Left cardiac atrium (tissue), 4 donors: ENCODE measurements at regions of chr12 and their contacts with region 1.

Region 1: GRCh38 chr12:113030875-113031525 is 25.5 kb upstream of the DTX1 start:
- DNase-seq: peak; percentile 24
- ATAC-seq: peak; percentile 65 to 72

Region 2: GRCh38 chr12:112900299-112901145 is 130.5 kb before region 1 on chr12:
- intact Hi-C with region 1: loop called in 1 of 2 experiments (anchors 5 kb)
- DNase-seq: no peak
- ATAC-seq: peak in 1 of 2 donors; percentile 21